ENCODE measurements at regions of chr3 and their contacts with region 1.

Region 1: GRCh38 chr3:37308247-37308646 is 133.9 kb upstream of the LRRFIP2 start:
- DNase-seq: peak; percentile 31
- H3K4me3 ChIP-seq: no peak overlapping the region
- H3K27ac ChIP-seq: no peak overlapping the region
- H3K4me1 ChIP-seq: no peaks in the 10 kb centered on the region
- H3K27me3 ChIP-seq: no peaks in the 10 kb centered on the region
- CTCF ChIP-seq: peak; percentile 11 to 18
- POLR2A ChIP-seq: no peak

Region 2: DNA sequence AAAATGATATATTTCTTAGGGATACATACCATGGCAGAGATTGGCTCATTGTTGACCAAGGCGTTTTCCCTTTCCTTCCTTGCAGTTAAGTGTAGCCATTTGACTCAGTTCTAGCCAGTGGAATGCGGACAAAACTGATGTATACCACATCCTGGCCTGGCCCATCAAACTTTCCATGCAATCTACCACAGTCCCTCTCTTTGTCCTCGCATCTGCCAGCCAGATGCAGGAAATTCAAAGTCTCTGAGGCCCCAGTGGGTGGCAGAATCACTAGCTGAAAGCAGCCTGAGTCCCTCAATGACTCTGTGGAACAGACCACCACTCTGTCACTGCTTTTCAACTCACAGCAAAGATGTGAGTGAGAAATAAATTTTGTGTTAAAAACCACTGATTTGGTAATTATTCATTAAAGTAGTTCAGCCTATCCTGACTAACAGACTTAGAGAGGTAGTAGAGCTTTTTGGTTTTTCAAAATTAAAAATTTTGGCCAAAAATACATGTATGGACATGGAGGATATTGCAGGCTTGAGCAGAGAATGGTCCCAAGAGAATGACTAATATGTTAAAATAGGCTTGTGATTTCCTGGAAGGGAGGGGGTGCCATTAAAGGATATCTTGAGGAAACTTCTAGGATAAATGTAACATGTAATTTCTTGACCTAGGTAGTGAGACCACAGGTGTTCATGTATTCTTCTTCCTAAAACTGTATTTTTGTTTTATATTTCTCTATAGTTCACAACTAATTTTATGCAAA is 144.8 kb before region 1 on chr3:
- CTCF ChIA-PET with region 1: no interaction called
- POLR2A ChIA-PET with region 1: no interaction called
- dilution Hi-C with region 1: no loop called
- intact Hi-C with region 1: no loop called
- DNase-seq: peak; percentile 61
- H3K4me3 ChIP-seq: no peak overlapping the region
- H3K27ac ChIP-seq: peak overlapping the region; percentile 30
- H3K4me1 ChIP-seq: peaks cover 13% of the 10 kb centered on the region
- H3K27me3 ChIP-seq: no peaks in the 10 kb centered on the region
- CTCF ChIP-seq: no peak
- POLR2A ChIP-seq: no peak

Region 3: GRCh38 chr3:37291275-37291700 is 17.0 kb before region 1 on chr3:
- CTCF ChIA-PET with region 1: interaction called, 15 read pairs
- POLR2A ChIA-PET with region 1: interaction called, 3 read pairs
- dilution Hi-C with region 1: no loop called
- intact Hi-C with region 1: no loop called
- DNase-seq: peak; percentile 34
- H3K4me3 ChIP-seq: no peak overlapping the region
- H3K27ac ChIP-seq: peak overlapping the region; percentile 11
- H3K4me1 ChIP-seq: peaks cover 26% of the 10 kb centered on the region
- H3K27me3 ChIP-seq: no peaks in the 10 kb centered on the region
- CTCF ChIP-seq: no peak
- POLR2A ChIP-seq: no peak

Region 4: DNA sequence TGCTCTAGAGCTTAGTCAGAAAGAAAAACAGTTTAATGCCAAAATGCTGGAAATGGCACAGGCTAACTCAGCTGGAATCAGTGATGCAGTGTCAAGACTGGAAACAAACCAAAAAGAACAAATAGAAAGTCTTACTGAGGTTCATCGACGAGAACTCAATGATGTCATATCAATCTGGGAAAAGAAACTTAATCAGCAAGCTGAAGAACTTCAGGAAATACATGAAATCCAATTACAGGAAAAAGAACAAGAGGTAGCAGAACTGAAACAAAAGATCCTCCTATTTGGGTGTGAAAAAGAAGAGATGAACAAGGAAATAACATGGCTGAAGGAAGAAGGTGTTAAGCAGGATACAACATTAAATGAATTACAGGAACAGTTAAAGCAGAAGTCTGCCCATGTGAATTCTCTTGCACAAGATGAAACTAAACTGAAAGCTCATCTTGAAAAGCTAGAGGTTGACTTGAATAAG is 16.6 kb after region 1 on chr3:
- CTCF ChIA-PET with region 1: interaction called, 12 read pairs
- POLR2A ChIA-PET with region 1: no interaction called
- dilution Hi-C with region 1: no loop called
- intact Hi-C with region 1: no loop called
- DNase-seq: peak; percentile 44
- H3K4me3 ChIP-seq: no peak overlapping the region
- H3K27ac ChIP-seq: no peak overlapping the region
- H3K4me1 ChIP-seq: no peaks in the 10 kb centered on the region
- H3K27me3 ChIP-seq: no peaks in the 10 kb centered on the region
- CTCF ChIP-seq: no peak
- POLR2A ChIP-seq: no peak

Region 5: GRCh38 chr3:37458162-37459120 is 150.2 kb after region 1 on chr3:
- CTCF ChIA-PET with region 1: no interaction called
- POLR2A ChIA-PET with region 1: no interaction called
- dilution Hi-C with region 1: no loop called
- intact Hi-C with region 1: no loop called
- DNase-seq: no peak
- H3K4me3 ChIP-seq: no peak overlapping the region
- H3K27ac ChIP-seq: no peak overlapping the region
- H3K4me1 ChIP-seq: no peaks in the 10 kb centered on the region
- H3K27me3 ChIP-seq: peaks cover 28 to 31% of the 10 kb centered on the region in 2 experiments
- CTCF ChIP-seq: no peak
- POLR2A ChIP-seq: no peak

Region 6: DNA sequence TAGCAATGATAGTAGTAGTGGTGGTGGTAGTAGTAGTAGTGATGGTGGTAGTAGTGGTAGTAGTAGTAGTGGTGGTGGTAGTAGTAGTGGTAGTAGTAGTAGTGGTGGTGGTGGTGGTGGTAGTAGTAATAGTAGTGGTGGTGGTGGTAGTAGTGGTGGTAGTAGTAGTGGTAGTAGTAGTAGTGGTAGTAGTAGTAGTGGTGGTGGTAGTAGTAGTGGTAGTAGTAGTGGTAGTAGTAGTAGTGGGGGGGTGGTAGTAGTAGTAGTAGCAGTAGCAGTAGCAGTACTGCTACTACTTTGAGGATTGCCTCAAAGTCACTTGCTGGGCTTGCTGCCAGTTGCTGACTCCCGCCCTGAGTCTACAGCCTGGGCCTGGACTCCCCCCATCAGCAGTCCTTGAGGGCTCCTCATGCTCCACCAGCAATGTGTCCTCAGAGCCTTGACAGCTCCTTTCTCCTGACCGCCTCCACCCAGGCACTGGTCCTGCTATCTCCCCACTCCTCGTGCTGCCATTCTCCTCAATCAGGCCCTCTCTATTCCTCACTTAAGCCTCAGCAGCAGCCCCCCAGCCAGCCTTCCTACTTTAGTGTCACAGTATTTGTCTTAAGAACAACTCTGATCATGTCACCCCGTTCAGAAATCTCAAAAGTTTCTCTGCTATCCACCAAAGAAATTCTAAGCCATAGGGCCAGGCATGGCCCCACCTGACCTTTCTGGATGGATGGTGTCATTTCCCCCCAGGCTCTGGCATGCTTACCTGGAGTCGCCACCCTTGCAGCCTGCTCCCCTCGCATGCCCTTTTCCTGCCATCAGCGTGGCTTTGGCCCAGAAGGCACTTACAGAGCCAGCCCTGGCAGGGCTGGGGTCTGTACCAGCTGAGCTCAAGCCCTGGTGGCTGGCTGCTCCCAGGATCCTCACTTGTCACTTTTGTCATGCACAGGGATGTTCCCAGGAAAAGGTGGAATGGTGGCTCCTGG is 776.4 kb after region 1 on chr3:
- CTCF ChIA-PET with region 1: no interaction called
- POLR2A ChIA-PET with region 1: no interaction called
- dilution Hi-C with region 1: no loop called
- intact Hi-C with region 1: no loop called
- DNase-seq: no peak
- H3K4me3 ChIP-seq: no peak overlapping the region
- H3K27ac ChIP-seq: no peak overlapping the region
- H3K4me1 ChIP-seq: no peaks in the 10 kb centered on the region
- H3K27me3 ChIP-seq: peaks cover 0 to 2% of the 10 kb centered on the region in 2 experiments
- CTCF ChIP-seq: no peak
- POLR2A ChIP-seq: no peak